ENCODE measurements at regions of chr14 and their contacts with region 1.

Region 1: GRCh38 chr14:73886449-73887317 is at the start of gene ZNF410:
- DNase-seq: peak; percentile 87 to 96 (median 90)
- ATAC-seq: peak; percentile 98
- H3K4me3 ChIP-seq: peak within 1 kb of the TSS; percentile 86
- H3K27ac ChIP-seq: peak within 1 kb of the TSS; percentile 96
- H3K4me1 ChIP-seq: peaks cover 4 to 6% of the 10 kb centered on the region in 2 experiments; a peak in 4 of 5 replicates
- H3K27me3 ChIP-seq: no peaks in the 10 kb centered on the region
- CTCF ChIP-seq: no peak
- EP300 ChIP-seq: peak; percentile 54; the same call in 1 of the 2 replicates
- POLR2A ChIP-seq: peak; percentile 71
- RAD21 ChIP-seq: no peak
- polyA plus RNA-seq, gene ZNF410: 48.6 to 64.8 TPM

Region 2: DNA sequence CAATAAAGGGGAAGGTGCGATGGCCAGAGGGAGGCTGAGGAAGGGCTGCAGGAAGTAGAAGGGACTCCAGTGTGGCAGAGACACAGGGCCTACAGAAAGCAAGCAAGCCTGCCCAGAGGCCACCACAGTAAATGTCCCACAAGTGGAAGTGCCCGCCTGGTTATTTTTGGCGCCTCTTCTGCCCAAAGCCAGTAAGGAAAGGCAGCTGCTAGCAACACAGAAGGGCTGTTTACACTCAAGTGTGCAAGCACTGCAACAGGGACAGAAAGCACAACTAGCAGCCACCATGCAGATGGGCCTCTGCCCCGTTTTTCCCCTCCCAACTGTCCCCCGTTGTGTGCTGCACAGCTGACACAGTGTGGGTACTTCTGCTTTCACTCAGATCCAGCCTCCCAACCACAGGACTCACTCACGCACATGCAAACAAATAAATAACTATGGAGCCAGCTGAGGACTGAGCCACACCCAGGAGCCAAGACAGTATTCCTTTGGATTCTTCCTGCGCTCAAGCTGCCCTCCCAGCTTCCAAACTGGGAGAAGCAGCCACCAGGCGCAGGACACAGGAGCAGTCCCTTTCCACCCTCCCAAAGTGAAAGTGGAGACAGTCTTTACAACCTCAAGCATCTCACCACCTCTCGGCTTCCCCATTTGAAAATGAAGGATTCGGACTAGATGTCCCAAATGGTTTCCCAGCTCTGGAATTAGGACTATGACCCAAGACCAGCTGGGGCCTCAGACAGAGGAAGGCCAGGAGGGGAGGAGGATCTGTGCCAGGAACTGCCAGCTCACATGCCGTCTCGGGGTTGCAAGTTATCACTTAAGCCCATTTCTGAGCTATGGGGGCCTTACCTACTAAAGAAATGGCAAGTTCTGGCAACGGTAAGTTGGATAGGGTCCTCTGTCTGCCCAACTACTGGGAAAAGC is 132.5 kb before region 1 on chr14:
- CTCF ChIA-PET with region 1: no interaction called
- POLR2A ChIA-PET with region 1: interaction called, 15 read pairs
- in situ Hi-C with region 1: no loop called
- intact Hi-C with region 1: no loop called
- DNase-seq: no peak
- ATAC-seq: peak; percentile 2
- H3K4me3 ChIP-seq: peak overlapping the region; percentile 33
- H3K27ac ChIP-seq: peak overlapping the region; percentile 84
- H3K4me1 ChIP-seq: peaks cover 74 to 76% of the 10 kb centered on the region in 2 experiments
- H3K27me3 ChIP-seq: no peaks in the 10 kb centered on the region
- CTCF ChIP-seq: no peak
- EP300 ChIP-seq: no peak
- POLR2A ChIP-seq: no peak
- RAD21 ChIP-seq: peak in 1 of 2 experiments; percentile 2; a peak in 1 of 4 replicates

Measured in K562 (cell line).